Mammary epithelial cell (primary cell): ENCODE measurements at regions of chr10 and their contacts with region 1.

Region 1: GRCh38 chr10:104300736-104301292 is 31.8 kb downstream of the GSTO2 start:
- DNase-seq: peak; percentile 95
- H3K4me3 ChIP-seq: no peak overlapping the region
- H3K27ac ChIP-seq: peak overlapping the region; percentile 97
- H3K4me1 ChIP-seq: peaks cover 25% of the 10 kb centered on the region
- H3K27me3 ChIP-seq: no peaks in the 10 kb centered on the region
- CTCF ChIP-seq: peak; percentile 12 to 41

Region 2: GRCh38 chr10:104231784-104232612 is 68.8 kb before region 1 on chr10 and contains the start of gene CFAP43:
- CTCF ChIA-PET with region 1: no interaction called
- dilution Hi-C with region 1: no loop called
- in situ Hi-C with region 1: no loop called
- intact Hi-C with region 1: no loop called
- DNase-seq: peak; percentile 96
- H3K4me3 ChIP-seq: peak within 1 kb of the TSS; percentile 60 to 98 (median 77)
- H3K27ac ChIP-seq: peak within 1 kb of the TSS; percentile 82
- H3K4me1 ChIP-seq: peaks cover 5% of the 10 kb centered on the region
- H3K27me3 ChIP-seq: no peaks in the 10 kb centered on the region
- CTCF ChIP-seq: no peak
- total RNA-seq, gene CFAP43: 0.33 TPM in 1 of 2 donors, not detected in the other

Region 3: DNA sequence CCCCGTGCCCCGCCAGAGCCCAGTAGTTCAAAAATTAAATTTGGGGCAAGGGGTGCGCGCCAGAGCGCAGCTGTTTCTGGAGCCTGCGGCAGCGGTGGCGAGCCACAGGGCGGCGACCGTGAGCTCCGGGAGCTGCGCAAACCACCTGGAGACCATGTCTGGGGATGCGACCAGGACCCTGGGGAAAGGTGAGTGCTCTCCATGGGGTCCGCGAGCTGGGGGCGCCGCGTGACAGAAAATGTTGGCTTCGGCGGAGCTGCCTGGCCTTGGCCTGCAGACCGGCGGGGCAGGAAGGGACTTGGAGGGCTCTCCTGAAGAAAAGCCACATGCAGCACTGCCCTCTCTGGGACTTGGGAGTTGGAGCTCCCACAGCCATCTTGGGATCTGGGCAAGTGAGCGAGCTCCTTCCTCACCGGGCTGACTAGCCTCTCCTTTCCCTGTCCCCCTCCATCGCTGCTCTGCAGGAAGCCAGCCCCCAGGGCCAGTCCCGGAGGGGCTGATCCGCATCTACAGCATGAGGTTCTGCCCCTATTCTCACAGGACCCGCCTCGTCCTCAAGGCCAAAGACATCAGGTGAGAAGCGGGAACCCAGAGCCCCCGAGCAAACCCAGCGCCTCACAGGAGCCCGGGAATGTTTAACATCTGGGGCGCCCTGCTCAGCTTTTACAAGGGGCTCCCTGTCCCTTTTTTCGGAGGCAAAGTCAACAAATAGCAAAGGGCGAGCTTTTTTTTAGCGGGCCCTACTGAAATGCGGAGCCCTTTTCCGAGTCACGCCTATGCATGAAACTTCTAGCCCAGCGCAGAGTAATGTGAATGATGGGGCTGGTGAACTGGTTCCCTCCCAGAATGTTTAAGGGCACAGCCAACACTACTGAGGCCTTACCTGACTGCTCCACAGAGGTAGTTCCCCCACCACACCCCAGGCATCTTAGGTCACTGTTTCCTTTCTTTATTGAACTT is 25.8 kb before region 1 on chr10:
- CTCF ChIA-PET with region 1: no interaction called
- dilution Hi-C with region 1: no loop called
- in situ Hi-C with region 1: no loop called
- intact Hi-C with region 1: loop called (anchors 1 kb)
- DNase-seq: peak; percentile 72
- H3K4me3 ChIP-seq: peak overlapping the region; percentile 56 to 74 (median 71)
- H3K27ac ChIP-seq: peak overlapping the region; percentile 58
- H3K4me1 ChIP-seq: peaks cover 10% of the 10 kb centered on the region
- H3K27me3 ChIP-seq: no peaks in the 10 kb centered on the region
- CTCF ChIP-seq: peak; percentile 88 to 96

Region 4: DNA sequence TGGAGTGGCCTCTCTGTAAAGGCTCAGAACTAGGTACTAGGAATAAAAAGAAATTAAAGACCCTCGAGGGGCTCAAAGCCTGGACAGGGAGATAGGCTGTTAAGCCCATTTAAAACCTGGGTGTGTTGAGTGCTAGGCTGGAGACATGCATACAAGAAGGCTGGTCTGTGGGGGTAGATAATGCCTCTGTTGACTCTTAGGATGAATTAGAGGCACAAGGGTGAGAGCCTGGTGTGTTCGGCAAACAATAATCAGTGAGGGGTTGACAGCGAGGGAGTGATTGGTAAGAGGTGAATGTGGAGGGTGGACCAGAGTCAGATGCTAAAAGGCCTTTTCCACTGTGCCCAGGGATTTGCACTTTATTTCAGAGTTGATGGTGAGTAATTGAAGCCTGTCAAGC is 19.1 kb before region 1 on chr10:
- CTCF ChIA-PET with region 1: no interaction called
- dilution Hi-C with region 1: no loop called
- in situ Hi-C with region 1: no loop called
- intact Hi-C with region 1: loop called (anchors 1 kb)
- DNase-seq: no peak
- H3K4me3 ChIP-seq: no peak overlapping the region
- H3K27ac ChIP-seq: no peak overlapping the region
- H3K4me1 ChIP-seq: peaks cover 3% of the 10 kb centered on the region
- H3K27me3 ChIP-seq: no peaks in the 10 kb centered on the region
- CTCF ChIP-seq: no peak

Region 5: DNA sequence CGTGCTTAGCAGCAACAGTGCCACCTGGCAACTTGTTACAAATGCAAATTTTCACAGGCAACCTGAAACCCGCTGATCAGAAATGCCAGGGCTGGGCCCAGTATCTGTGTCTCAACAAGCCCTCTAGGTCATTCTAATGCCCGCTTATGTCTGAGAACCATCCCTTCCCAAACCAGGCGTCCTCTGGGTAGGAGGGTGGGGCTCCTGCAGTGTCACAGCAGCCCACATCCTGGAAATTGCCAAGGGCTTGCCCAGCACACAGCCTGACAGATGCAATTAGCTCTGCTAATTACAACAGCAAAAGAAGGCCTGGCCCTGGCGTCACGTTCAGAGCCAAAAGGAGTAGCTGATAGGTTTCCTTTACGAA is 21.6 kb after region 1 on chr10:
- CTCF ChIA-PET with region 1: interaction called, 3 read pairs
- dilution Hi-C with region 1: no loop called
- in situ Hi-C with region 1: no loop called
- intact Hi-C with region 1: loop called (anchors 2 kb)
- DNase-seq: peak; percentile 92
- H3K4me3 ChIP-seq: no peak overlapping the region
- H3K27ac ChIP-seq: peak overlapping the region; percentile 97
- H3K4me1 ChIP-seq: peaks cover 79% of the 10 kb centered on the region
- H3K27me3 ChIP-seq: no peaks in the 10 kb centered on the region
- CTCF ChIP-seq: peak in 1 of 2 donors; percentile 29

Region 6: DNA sequence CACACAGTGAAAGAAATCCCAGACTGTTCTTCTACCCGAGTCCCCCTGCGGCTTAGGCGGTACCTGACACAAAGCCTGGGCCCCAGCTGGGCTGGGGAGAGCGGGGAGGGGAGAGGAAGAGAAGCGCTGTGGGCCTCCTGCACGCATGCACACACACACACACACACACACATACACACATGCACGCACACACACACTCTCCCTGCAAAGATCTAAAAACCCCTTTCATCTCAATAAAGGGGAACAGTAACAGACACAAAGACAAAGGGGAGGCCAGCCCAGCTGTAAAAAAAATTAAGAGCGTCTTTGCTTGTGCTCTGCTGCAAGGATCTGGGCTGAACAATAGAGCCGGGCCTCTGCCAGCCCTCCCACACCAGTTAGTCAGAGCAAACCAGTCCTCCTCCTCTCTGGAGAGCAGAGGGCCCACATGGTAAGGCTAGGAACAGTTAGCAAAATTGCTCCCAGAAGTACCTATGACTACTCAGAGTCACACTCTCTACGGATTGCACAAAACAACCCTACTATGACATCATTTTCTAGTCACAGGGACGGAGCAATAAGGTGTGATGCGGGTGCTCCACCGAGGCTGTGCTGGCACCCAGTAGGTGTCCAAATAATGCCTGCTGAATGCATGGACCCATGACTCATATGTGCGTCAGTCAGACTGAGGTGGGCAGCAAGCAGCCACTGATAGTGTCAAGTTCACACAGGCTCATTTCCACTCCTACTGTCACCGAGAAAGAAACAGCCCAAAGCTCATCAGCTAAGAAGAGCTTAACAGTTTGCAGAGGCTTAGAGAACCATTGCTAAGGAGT is 28.3 kb after region 1 on chr10:
- CTCF ChIA-PET with region 1: no interaction called
- dilution Hi-C with region 1: no loop called
- in situ Hi-C with region 1: no loop called
- intact Hi-C with region 1: loop called (anchors 1 kb)
- DNase-seq: peak; percentile 99
- H3K4me3 ChIP-seq: peak overlapping the region in 2 of 3 experiments; percentile 24 to 35
- H3K27ac ChIP-seq: peak overlapping the region; percentile 98
- H3K4me1 ChIP-seq: peaks cover 77% of the 10 kb centered on the region
- H3K27me3 ChIP-seq: no peaks in the 10 kb centered on the region
- CTCF ChIP-seq: no peak

Region 7: DNA sequence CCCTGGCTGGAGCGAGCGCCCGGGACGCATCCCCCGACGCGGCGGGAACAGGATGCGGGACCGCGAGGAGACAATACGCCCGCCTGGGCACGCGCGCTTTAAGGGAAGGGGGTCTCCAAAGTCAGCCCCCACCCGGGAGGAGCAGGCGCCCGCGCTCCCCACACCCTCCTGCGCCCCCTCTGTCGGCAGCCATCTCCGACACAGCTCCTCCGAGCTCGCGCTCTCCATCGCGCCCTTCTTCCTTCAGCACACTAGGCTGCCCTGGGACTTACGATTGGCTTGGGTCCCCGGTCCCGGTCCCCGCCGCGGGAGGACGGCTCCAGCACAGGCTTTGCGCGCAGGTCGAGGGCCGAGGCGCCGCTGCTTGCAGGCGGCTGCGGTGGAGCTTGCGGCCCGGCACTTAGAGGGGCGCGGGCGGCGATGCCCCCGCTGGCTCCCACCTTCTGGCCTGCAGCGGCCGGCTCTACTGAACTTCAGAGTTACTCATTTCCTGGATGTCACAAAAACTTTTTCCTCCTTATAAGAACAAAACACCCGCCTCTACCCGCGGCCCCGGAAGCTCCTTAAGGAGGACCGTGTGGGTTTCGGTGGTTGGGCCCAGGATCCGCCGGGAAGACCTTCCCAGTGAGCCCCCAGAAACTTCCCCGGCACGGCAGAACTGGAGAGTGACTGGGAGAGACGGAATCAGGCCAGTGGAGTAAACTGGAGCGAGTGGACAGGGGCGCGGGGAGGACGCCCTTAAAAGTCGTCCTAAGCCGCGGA is 37.3 kb after region 1 on chr10 and contains the start of gene ITPRIP:
- CTCF ChIA-PET with region 1: no interaction called
- dilution Hi-C with region 1: no loop called
- in situ Hi-C with region 1: no loop called
- intact Hi-C with region 1: loop called (anchors 1 kb)
- DNase-seq: peak; percentile 82
- H3K4me3 ChIP-seq: peak within 1 kb of the TSS; percentile 93 to 97 (median 95)
- H3K27ac ChIP-seq: peak within 1 kb of the TSS; percentile 97
- H3K4me1 ChIP-seq: peaks cover 33% of the 10 kb centered on the region
- H3K27me3 ChIP-seq: no peaks in the 10 kb centered on the region
- CTCF ChIP-seq: peak in 1 of 2 donors; percentile 22
- total RNA-seq, gene ITPRIP: 21.5 to 37.2 TPM

Region 8: GRCh38 chr10:104424719-104425118 is 123.9 kb after region 1 on chr10:
- CTCF ChIA-PET with region 1: no interaction called
- dilution Hi-C with region 1: no loop called
- in situ Hi-C with region 1: no loop called
- intact Hi-C with region 1: no loop called
- DNase-seq: peak; percentile 74
- H3K4me3 ChIP-seq: no peak overlapping the region
- H3K27ac ChIP-seq: no peak overlapping the region
- H3K4me1 ChIP-seq: peaks cover 20% of the 10 kb centered on the region
- H3K27me3 ChIP-seq: no peaks in the 10 kb centered on the region
- CTCF ChIP-seq: no peak